ENCODE measurements at regions of chr7 and their contacts with region 1.

Region 1: GRCh38 chr7:150514748-150515222 is at the start of gene GIMAP7:
- DNase-seq: peak; percentile 73
- ATAC-seq: peak; percentile 81
- H3K4me3 Mint-ChIP-seq: peak within 1 kb of the TSS; percentile 96
- H3K27ac Mint-ChIP-seq: peak within 1 kb of the TSS; percentile 99
- H3K4me1 Mint-ChIP-seq: peaks cover 48% of the 10 kb centered on the region
- H3K27me3 Mint-ChIP-seq: no peaks in the 10 kb centered on the region
- total RNA-seq, gene GIMAP7: 34.5 to 36.9 TPM

Region 2: GRCh38 chr7:150481186-150481920 is 33.4 kb before region 1 on chr7:
- CTCF ChIA-PET with region 1: interaction called, 5 read pairs
- POLR2A ChIA-PET with region 1: interaction called, 12 read pairs
- intact Hi-C with region 1: loop called in 1 of 2 experiments (anchors 5 kb)
- DNase-seq: peak; percentile 56
- ATAC-seq: peak; percentile 70
- H3K4me3 Mint-ChIP-seq: peak overlapping the region; percentile 67
- H3K27ac Mint-ChIP-seq: peak overlapping the region; percentile 100
- H3K4me1 Mint-ChIP-seq: peaks cover 97% of the 10 kb centered on the region
- H3K27me3 Mint-ChIP-seq: no peaks in the 10 kb centered on the region

Region 3: DNA sequence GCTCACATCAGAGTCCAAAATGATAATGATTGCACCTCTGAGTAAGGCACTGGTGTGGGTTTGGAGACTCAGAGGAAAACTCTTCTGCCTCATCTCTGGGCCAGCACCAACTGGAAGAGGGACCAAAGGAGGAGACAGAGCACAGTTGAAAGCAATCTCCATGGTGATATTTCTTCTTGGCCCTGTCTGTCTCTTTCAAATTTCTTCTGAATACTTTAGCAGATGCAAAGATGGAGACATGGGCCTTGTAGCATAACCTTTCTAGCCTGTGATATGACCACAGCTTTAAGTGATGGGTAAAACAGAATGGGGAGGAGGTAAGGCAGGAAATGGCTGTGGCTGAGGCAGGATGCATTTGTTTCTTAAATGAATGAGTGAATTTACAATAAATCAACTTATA is 12.3 kb before region 1 on chr7:
- CTCF ChIA-PET with region 1: interaction called, 7 read pairs
- POLR2A ChIA-PET with region 1: interaction called, 13 read pairs
- intact Hi-C with region 1: no loop called
- DNase-seq: peak; percentile 56
- ATAC-seq: peak; percentile 74
- H3K4me3 Mint-ChIP-seq: peak overlapping the region; percentile 17
- H3K27ac Mint-ChIP-seq: peak overlapping the region; percentile 98
- H3K4me1 Mint-ChIP-seq: peaks cover 72% of the 10 kb centered on the region
- H3K27me3 Mint-ChIP-seq: no peaks in the 10 kb centered on the region

Region 4: GRCh38 chr7:150898475-150899011 is 383.8 kb after region 1 on chr7:
- CTCF ChIA-PET with region 1: no interaction called
- POLR2A ChIA-PET with region 1: no interaction called
- intact Hi-C with region 1: no loop called
- DNase-seq: peak; percentile 89
- ATAC-seq: peak; percentile 86
- H3K4me3 Mint-ChIP-seq: no peak overlapping the region
- H3K27ac Mint-ChIP-seq: peak overlapping the region; percentile 15
- H3K4me1 Mint-ChIP-seq: peaks cover 12% of the 10 kb centered on the region
- H3K27me3 Mint-ChIP-seq: peaks cover 31% of the 10 kb centered on the region

Region 5: GRCh38 chr7:151080522-151081169 is 565.9 kb after region 1 on chr7 and contains the start of gene FASTK:
- CTCF ChIA-PET with region 1: interaction called, 3 read pairs
- POLR2A ChIA-PET with region 1: no interaction called
- intact Hi-C with region 1: loop called in 1 of 2 experiments (anchors 10 kb)
- DNase-seq: peak; percentile 94
- ATAC-seq: peak; percentile 89
- H3K4me3 Mint-ChIP-seq: peak within 1 kb of the TSS; percentile 94
- H3K27ac Mint-ChIP-seq: peak within 1 kb of the TSS; percentile 91
- H3K4me1 Mint-ChIP-seq: peaks cover 43% of the 10 kb centered on the region
- H3K27me3 Mint-ChIP-seq: peaks cover 7% of the 10 kb centered on the region
- total RNA-seq, gene FASTK: 56.6 to 56.7 TPM

Measured in activated CD4-positive, alpha-beta T cell treated with anti-CD3 and anti-CD28 coated beads for 36 hours (primary cell).